ENCODE measurements at regions of chr6 and their contacts with region 1.

Region 1: GRCh38 chr6:10429638-10430427 is 15.0 kb upstream of the TFAP2A start:
- DNase-seq: no peak
- ATAC-seq: peak; percentile 85
- H3K4me3 ChIP-seq: peak overlapping the region in 1 of 2 experiments; percentile 28; a peak in 1 of 4 replicates
- H3K27ac ChIP-seq: no peak overlapping the region
- H3K4me1 ChIP-seq: peaks cover 10 to 35% of the 10 kb centered on the region in 2 experiments; a peak in 3 of 4 replicates
- H3K27me3 ChIP-seq: no peaks in the 10 kb centered on the region
- CTCF ChIP-seq: peak; percentile 46 to 76 (median 74); a peak in 5 of 6 replicates
- POLR2A ChIP-seq: peak; percentile 32
- RAD21 ChIP-seq: peak; percentile 94

Region 2: DNA sequence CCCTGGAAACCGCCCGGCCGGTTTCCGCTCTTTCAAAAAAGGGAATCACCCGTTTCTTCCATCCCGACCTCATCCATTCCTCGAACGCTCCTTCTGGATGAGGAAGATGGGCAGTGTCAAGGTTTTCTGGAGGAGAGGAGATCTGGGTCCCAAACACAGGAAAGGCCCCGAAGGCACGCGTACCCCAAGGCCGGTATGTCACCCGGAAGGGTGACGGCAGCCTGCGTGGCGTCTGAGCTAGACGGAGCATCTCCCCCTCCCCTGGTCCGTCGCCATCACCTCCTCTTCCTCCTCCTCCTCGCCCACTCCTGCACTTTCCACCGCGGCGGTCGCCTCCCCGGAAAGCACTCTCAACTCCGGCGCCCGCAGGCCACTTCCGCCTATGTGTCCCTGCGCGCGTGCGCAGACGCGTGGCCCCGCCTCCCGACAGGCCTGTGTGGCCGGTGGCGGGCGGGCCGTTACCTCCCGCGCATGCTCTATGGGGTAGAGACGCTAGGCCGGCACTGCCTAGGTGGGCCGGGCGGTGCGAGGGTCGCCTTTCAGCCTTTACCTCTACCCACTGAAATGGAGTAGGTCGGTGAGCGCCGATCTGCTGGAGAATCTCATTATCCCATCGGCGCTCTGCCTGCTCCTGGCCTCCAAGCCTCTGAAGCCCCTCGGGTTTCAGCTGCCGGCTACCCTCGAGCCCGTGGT is 1994.5 kb before region 1 on chr6 and contains the start of gene SLC35B3:
- CTCF ChIA-PET with region 1: no interaction called
- POLR2A ChIA-PET with region 1: no interaction called
- RAD21 ChIA-PET with region 1: no interaction called
- intact Hi-C with region 1: loop called (anchors 2 kb)
- DNase-seq: peak; percentile 74
- ATAC-seq: peak; percentile 99
- H3K4me3 ChIP-seq: peak within 1 kb of the TSS; percentile 67 to 89
- H3K27ac ChIP-seq: peak within 1 kb of the TSS; percentile 70
- H3K4me1 ChIP-seq: peaks cover 2 to 15% of the 10 kb centered on the region in 2 experiments; a peak in 3 of 4 replicates
- H3K27me3 ChIP-seq: no peaks in the 10 kb centered on the region
- CTCF ChIP-seq: no peak
- POLR2A ChIP-seq: peak; percentile 84
- RAD21 ChIP-seq: no peak
- total RNA-seq, gene SLC35B3: 8.6 TPM

Region 3: GRCh38 chr6:8983188-8983688 is 1446.6 kb before region 1 on chr6:
- CTCF ChIA-PET with region 1: interaction called, 4 read pairs
- POLR2A ChIA-PET with region 1: no interaction called
- RAD21 ChIA-PET with region 1: no interaction called
- intact Hi-C with region 1: loop called (anchors 5 kb)
- DNase-seq: peak; percentile 61
- ATAC-seq: peak; percentile 98
- H3K4me3 ChIP-seq: no peak overlapping the region
- H3K27ac ChIP-seq: no peak overlapping the region
- H3K4me1 ChIP-seq: peaks cover 0 to 5% of the 10 kb centered on the region in 2 experiments; a peak in 1 of 4 replicates
- H3K27me3 ChIP-seq: no peaks in the 10 kb centered on the region
- CTCF ChIP-seq: peak; percentile 91 to 98 (median 91)
- POLR2A ChIP-seq: no peak
- RAD21 ChIP-seq: peak; percentile 91

Region 4: DNA sequence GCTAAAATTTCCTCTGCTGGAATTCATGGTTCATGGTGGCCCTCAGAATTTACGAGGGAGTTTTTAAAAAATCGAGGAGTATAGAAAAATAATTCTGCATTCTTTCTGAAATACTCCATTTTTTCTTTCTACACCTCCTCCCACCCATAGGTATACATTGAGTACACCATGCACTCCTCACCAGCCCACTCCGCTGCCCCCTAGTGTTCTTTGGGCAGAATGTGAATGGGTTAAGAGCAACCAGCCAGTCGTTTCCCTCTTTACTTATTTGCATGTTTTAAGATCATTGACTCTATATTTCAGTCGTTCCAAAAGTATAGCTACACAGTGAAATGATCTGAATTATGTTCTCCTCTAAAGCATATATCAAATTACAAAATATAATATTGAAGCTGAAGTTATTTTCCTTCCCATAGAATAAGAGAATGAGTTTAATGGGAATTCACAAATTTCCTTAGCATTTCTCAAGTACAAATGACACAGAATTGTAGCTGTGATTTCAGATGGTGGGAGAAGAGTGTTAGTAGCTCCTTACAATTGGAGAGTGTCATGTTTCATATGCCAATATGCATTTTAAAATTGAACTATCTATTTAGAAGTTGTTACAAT is 1016.8 kb before region 1 on chr6:
- CTCF ChIA-PET with region 1: no interaction called
- POLR2A ChIA-PET with region 1: no interaction called
- RAD21 ChIA-PET with region 1: no interaction called
- intact Hi-C with region 1: loop called (anchors 10 kb)
- DNase-seq: peak; percentile 34
- ATAC-seq: peak; percentile 99
- H3K4me3 ChIP-seq: no peak overlapping the region
- H3K27ac ChIP-seq: no peak overlapping the region
- H3K4me1 ChIP-seq: no peaks in the 10 kb centered on the region
- H3K27me3 ChIP-seq: no peaks in the 10 kb centered on the region
- CTCF ChIP-seq: peak; percentile 47 to 85 (median 80); a peak in 5 of 6 replicates
- POLR2A ChIP-seq: no peak
- RAD21 ChIP-seq: peak; percentile 64

Region 5: GRCh38 chr6:10411971-10412745 is 17.7 kb before region 1 on chr6:
- CTCF ChIA-PET with region 1: interaction called, 23 read pairs
- POLR2A ChIA-PET with region 1: interaction called, 28 read pairs
- RAD21 ChIA-PET with region 1: interaction called, 6 to 9 read pairs
- intact Hi-C with region 1: no loop called
- DNase-seq: no peak
- ATAC-seq: peak; percentile 39
- H3K4me3 ChIP-seq: peak overlapping the region; percentile 64 to 87
- H3K27ac ChIP-seq: peak overlapping the region; percentile 92
- H3K4me1 ChIP-seq: peaks cover 5 to 18% of the 10 kb centered on the region in 2 experiments; a peak in 3 of 4 replicates
- H3K27me3 ChIP-seq: no peaks in the 10 kb centered on the region
- CTCF ChIP-seq: no peak
- POLR2A ChIP-seq: no peak
- RAD21 ChIP-seq: no peak